Caco-2 (cell line): ENCODE measurements at regions of chr13 and their contacts with region 1.

Region 1: GRCh38 chr13:21753117-21753729 is 82.3 kb downstream of the FGF9 start:
- DNase-seq: no peak
- H3K4me3 ChIP-seq: no peak overlapping the region
- H3K4me3 Mint-ChIP-seq: no peak overlapping the region
- H3K27ac Mint-ChIP-seq: peak overlapping the region; percentile 39
- H3K4me1 ChIP-seq: peaks cover 34% of the 10 kb centered on the region
- H3K4me1 Mint-ChIP-seq: peaks cover 57% of the 10 kb centered on the region
- H3K27me3 ChIP-seq: no peaks in the 10 kb centered on the region
- H3K27me3 Mint-ChIP-seq: no peaks in the 10 kb centered on the region
- CTCF ChIP-seq: no peak

Region 2: DNA sequence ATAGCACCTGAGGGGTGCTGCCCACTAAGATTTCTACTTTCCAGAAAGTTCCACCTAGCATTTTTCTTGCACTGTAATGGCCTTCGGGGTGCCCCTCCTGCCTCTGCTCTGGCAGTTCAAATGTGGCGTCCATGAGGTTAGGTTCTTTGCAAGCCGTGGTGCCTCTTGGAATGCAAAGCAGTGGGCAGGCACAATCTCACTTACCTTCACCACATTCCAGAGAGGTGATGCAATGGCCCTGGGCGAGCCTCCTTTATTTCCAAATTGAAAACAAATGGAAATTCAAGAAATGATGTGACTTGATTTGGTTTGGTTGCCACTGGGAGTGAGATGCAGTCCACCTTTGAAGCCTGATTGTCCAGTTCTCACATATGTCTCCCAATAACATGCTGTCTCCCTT is 35.4 kb before region 1 on chr13:
- CTCF ChIA-PET with region 1: no interaction called
- POLR2A ChIA-PET with region 1: no interaction called
- intact Hi-C with region 1: loop called (anchors 2 kb)
- DNase-seq: peak in 1 of 2 experiments; percentile 15
- H3K4me3 ChIP-seq: no peak overlapping the region
- H3K4me3 Mint-ChIP-seq: no peak overlapping the region
- H3K27ac Mint-ChIP-seq: peak overlapping the region; percentile 24
- H3K4me1 ChIP-seq: peaks cover 14% of the 10 kb centered on the region
- H3K4me1 Mint-ChIP-seq: peaks cover 22% of the 10 kb centered on the region
- H3K27me3 ChIP-seq: no peaks in the 10 kb centered on the region
- H3K27me3 Mint-ChIP-seq: no peaks in the 10 kb centered on the region
- CTCF ChIP-seq: no peak

Region 3: GRCh38 chr13:21796066-21796465 is 42.8 kb after region 1 on chr13:
- CTCF ChIA-PET with region 1: no interaction called
- POLR2A ChIA-PET with region 1: no interaction called
- intact Hi-C with region 1: no loop called
- DNase-seq: no peak
- H3K4me3 ChIP-seq: no peak overlapping the region
- H3K4me3 Mint-ChIP-seq: no peak overlapping the region
- H3K27ac Mint-ChIP-seq: no peak overlapping the region
- H3K4me1 ChIP-seq: no peaks in the 10 kb centered on the region
- H3K4me1 Mint-ChIP-seq: peaks cover 2% of the 10 kb centered on the region
- H3K27me3 ChIP-seq: no peaks in the 10 kb centered on the region
- H3K27me3 Mint-ChIP-seq: no peaks in the 10 kb centered on the region
- CTCF ChIP-seq: no peak